Stomach (tissue), 19 donors: ENCODE measurements at regions of chr6 and their contacts with region 1.

Region 1: DNA sequence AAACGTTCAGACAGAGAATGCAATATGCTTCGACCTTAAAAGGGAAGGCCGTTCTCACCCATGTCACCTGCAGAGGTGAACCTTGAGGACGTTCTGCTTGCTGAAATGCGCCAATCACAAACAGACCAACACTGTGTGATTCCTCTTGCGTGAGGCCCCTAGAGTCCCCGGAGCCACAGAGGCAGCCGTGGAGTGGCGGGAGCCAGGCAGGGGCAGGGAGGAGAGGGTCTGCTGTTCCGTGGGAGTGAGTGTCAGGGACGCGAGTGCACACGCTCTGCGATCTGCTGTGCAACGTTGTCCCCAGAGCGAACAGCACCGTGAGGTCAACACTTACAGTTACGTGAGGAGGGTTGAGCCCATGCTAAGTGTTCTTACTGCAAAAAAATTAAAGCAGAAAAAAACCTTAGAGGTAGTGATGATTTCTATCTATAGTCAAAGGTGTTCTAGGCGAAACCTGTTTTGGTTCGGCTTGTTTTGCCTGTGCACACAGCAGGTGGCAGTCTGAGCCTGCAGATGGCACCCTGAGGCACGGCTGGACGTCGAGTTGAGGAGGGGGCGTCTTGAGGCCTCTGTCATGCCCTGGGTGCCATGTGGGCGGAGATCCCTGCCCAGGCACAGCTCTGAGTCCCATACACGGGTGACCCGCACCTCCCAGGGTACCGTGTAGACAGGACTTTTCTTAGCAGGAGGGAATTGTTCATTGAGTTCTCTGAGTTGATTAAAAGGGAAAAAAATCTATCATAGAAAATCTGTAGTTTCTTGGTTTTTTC is 71.7 kb upstream of the FRMD1 start:
- DNase-seq: peak in 1 of 2 donors; percentile 66
- H3K4me3 ChIP-seq: no peak overlapping the region
- H3K27ac ChIP-seq: no peak overlapping the region
- H3K4me1 ChIP-seq: peaks cover 0 to 16% (median 11%) of the 10 kb centered on the region in 4 donors
- H3K27me3 ChIP-seq: peaks cover 0 to 21% (median 0%) of the 10 kb centered on the region in 3 donors
- CTCF ChIP-seq: peak in 5 of 7 experiments; percentile 11 to 58 (median 25)
- EP300 ChIP-seq: no peak
- POLR2A ChIP-seq: no peak

Region 2: DNA sequence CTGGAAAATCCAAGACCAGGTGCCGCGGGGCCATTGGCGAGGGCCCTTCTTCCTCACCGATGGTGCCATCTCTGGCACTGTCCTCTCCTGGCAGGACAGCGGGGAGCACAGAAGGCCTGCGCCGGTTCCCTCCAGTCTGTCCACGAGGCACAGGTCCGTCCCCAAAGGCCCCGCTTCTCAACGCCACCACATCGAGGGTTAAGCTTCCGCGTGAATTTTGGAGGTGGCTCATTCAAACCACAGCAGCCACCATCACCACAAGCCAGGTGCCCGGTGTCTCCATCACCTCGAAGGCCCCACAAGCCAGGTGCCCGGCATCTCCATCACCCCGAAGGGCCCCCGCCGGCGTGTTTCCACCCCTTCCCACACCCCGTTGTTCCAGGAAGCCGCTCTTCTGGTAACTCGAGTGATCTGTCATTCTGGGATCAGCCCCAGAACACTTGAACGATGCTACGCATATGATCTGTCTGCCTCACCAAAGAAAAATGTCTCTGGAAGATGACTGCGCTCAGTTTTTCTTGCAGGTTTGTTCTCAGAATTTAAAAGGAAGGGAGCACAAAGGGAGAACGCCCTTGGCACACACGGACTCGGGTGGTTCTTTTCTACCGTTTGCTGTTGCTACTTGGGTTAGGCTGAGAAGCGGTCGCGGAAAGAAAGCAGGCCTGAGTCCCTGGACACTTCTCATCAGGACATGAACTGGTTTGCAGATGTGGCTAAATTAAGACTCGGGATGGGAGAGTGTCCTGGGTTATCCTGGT is 163.2 kb before region 1 on chr6:
- intact Hi-C with region 1: no loop called
- DNase-seq: no peak
- H3K4me3 ChIP-seq: no peak overlapping the region
- H3K27ac ChIP-seq: no peak overlapping the region
- H3K4me1 ChIP-seq: no peaks in the 10 kb centered on the region
- H3K27me3 ChIP-seq: no peaks in the 10 kb centered on the region
- CTCF ChIP-seq: no peak
- EP300 ChIP-seq: no peak
- POLR2A ChIP-seq: no peak

Region 3: DNA sequence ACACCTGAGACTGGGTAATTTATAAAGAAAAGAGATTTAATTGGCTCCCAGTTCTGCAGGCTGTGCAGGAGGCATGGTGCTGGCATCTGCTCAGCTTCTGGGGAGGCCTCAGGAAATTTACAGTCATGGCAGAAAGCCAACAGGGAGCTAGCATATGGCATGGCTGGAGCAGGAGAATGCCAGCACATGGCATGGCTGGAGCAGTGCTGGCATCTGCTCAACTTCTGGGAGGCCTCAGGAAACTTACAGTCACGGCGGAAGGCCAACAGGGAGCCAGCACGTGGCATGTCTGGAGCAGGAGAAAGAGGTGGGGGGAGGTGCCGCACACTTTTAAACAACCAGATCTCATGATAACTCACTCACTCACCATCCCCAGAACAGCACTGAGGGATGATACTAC is 201.4 kb after region 1 on chr6:
- intact Hi-C with region 1: loop called (anchors 5 kb)
- DNase-seq: no peak
- H3K4me3 ChIP-seq: no peak overlapping the region
- H3K27ac ChIP-seq: no peak overlapping the region
- H3K4me1 ChIP-seq: peaks cover 0 to 5% (median 3%) of the 10 kb centered on the region in 4 donors
- H3K27me3 ChIP-seq: peaks cover 0 to 7% (median 0%) of the 10 kb centered on the region in 3 donors
- CTCF ChIP-seq: no peak
- EP300 ChIP-seq: no peak
- POLR2A ChIP-seq: no peak

Region 4: DNA sequence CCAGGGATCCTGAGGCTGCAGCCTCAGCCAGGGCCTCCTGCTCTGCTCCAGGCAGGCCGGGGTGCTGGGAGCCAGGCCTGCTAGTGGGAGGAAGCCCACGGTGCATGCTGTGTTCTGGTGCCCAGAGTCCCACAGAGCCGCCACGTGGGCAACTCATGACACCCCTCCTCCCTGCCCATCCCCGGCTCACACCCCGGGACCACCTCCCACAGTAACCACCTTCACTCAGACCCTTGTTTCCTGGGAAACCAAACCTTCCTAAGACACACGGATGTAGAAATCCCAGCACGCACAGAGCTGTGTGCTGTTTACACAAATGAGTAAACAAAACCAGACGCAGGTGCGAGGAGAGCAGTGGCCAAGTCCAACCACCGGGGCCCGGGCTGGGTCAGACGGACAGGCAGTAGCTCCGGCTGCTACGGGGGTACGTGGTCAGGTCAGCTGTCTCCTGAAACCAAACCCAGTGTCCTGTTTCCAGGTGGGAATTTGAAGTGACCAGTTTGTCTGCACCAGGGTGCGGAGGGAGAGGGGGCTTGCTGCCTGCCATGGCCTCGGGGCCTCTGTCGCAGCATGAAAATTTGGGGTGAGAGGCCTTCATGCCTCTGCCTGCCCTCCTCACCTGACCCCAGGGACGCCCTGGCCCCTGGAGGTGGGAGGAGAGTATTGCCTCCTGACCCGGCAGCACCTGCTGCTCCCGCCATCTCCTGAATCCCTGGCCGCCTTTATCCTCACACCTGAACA is 238.1 kb after region 1 on chr6:
- intact Hi-C with region 1: no loop called
- DNase-seq: peak; percentile 75 to 77
- H3K4me3 ChIP-seq: no peak overlapping the region
- H3K27ac ChIP-seq: peak overlapping the region in 3 of 5 donors; percentile 29 to 63 (median 49)
- H3K4me1 ChIP-seq: peaks cover 0 to 14% (median 8%) of the 10 kb centered on the region in 4 donors
- H3K27me3 ChIP-seq: peaks cover 0 to 10% (median 0%) of the 10 kb centered on the region in 3 donors
- CTCF ChIP-seq: no peak
- EP300 ChIP-seq: no peak
- POLR2A ChIP-seq: no peak